Body of pancreas (tissue), 4 donors: ENCODE measurements at regions of chr14 and their contacts with region 1.

Region 1: DNA sequence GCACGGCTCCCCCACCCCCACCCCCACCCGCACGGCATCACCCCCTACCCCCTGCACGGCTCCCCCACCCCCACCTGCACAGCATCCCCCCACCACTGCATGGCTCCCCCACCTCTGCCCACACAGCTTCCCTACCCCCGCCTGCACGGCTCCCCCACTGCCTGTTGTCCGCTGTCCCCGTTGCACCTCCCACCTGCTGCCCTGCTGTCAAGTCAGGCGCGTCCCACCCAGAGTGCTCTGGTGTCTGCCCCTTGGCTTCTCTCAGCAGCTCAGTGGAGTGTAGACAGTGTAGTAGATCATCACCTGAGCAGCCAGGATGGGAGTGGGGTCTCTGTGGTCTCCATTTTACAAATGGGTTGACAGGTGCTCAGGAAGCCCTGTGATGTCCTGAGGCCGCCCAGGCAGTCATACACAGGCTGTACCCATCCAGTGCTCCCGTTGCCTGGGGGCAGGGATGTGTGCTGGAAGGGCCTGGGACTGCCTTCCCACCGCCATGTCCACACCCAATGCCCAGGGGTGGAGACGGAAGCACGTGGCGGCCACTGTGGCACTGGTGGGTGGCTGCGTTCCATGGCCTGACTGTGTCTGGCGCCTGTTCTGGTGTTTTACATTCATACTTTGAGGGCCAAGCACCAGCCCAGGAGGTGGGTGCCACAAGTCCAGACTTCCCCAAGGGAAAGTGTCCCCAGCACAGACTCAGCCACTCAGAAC is 32.5 kb downstream of the PACS2 start:
- DNase-seq: no peak
- ATAC-seq: no peak
- H3K4me3 ChIP-seq: no peak overlapping the region
- H3K27ac ChIP-seq: no peak overlapping the region
- H3K4me1 ChIP-seq: peaks cover 19% of the 10 kb centered on the region
- H3K27me3 ChIP-seq: no peaks in the 10 kb centered on the region
- CTCF ChIP-seq: no peak
- POLR2A ChIP-seq: no peak

Region 2: DNA sequence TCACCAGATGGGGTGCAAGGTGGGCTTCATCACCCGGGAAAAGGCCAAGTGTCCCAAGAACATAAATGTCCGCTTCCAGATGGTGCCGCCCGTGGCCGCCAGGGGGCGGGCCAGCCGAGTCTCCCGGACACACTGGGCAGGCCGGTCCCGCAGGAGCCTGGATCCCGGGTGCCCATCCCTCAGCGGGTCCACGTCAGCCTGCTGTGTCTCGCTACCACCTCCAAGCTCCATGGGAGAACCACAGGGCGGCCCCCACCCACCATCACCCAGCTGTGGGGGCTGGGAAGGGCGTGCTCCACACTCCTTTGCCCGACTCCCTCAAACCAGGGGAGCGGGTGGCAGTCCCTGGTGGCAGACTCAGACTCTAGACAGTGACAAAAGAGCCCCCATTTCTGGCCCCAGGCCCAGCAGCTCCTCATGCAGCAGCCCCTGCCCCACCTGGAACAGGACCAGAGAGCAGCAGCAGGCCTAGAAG is 143.9 kb before region 1 on chr14:
- intact Hi-C with region 1: loop called (anchors 5 kb)
- DNase-seq: peak; percentile 77 to 87 (median 84)
- ATAC-seq: peak; percentile 57
- H3K4me3 ChIP-seq: no peak overlapping the region
- H3K27ac ChIP-seq: no peak overlapping the region
- H3K4me1 ChIP-seq: peaks cover 49% of the 10 kb centered on the region
- H3K27me3 ChIP-seq: peaks cover 0 to 25% of the 10 kb centered on the region in 2 donors
- CTCF ChIP-seq: peak; percentile 84 to 96 (median 89)
- POLR2A ChIP-seq: no peak

Region 3: GRCh38 chr14:105267820-105268548 is 79.0 kb before region 1 on chr14:
- intact Hi-C with region 1: no loop called
- DNase-seq: no peak
- ATAC-seq: no peak
- H3K4me3 ChIP-seq: no peak overlapping the region
- H3K27ac ChIP-seq: no peak overlapping the region
- H3K4me1 ChIP-seq: peaks cover 24% of the 10 kb centered on the region
- H3K27me3 ChIP-seq: no peaks in the 10 kb centered on the region
- CTCF ChIP-seq: peak in 1 of 7 experiments; percentile 5
- POLR2A ChIP-seq: no peak

Region 4: GRCh38 chr14:105287306-105288102 is 59.5 kb before region 1 on chr14:
- intact Hi-C with region 1: loop called (anchors 5 kb)
- DNase-seq: no peak
- ATAC-seq: no peak
- H3K4me3 ChIP-seq: no peak overlapping the region
- H3K27ac ChIP-seq: no peak overlapping the region
- H3K4me1 ChIP-seq: peaks cover 28% of the 10 kb centered on the region
- H3K27me3 ChIP-seq: no peaks in the 10 kb centered on the region
- CTCF ChIP-seq: no peak
- POLR2A ChIP-seq: no peak